ENCODE measurements at regions of chr17 and their contacts with region 1.

Region 1: DNA sequence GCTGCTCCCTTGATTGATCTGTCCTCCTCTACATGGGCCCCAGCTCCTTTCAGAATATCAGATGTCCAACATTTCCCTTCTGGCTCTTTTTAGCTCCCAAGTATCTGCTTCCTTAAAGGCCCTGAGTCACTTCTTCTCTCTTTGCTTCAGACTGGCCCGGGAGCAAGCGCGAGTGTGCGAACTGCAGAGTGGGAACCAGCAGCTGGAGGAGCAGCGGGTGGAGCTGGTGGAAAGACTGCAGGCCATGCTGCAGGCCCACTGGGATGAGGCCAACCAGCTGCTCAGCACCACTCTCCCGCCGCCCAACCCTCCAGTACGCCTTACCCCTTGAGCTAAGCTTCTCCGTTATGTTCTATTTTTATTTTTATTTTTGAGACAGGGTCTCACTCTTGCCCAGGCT is 12.3 kb downstream of the CNTROB start:
- DNase-seq: no peak
- H3K4me3 ChIP-seq: no peak overlapping the region
- CTCF ChIP-seq: no peak

Region 2: DNA sequence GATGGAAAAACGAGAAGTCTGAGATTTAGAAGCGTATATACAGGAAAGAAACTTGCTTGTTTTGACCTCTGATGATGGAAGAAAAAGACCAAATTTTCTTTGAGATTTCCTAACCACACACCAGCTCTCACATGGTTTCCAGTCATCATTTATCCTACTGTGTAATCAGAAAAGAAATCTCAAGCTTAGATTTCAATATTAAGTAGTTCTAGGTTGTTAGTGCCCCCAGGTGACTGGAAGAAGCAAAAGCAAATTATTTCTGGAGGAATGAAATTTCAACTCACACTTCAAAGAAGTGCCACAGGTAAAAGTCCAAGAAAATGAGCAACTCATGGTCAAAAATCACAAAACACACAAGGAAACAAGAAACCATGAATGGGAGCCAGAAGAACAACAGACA is 162.1 kb before region 1 on chr17:
- CTCF ChIA-PET with region 1: no interaction called
- POLR2A ChIA-PET with region 1: no interaction called
- DNase-seq: no peak
- H3K4me3 ChIP-seq: no peak overlapping the region
- CTCF ChIP-seq: no peak

Region 3: GRCh38 chr17:7931709-7932482 is 12.4 kb before region 1 on chr17 and contains the starts of genes CNTROB and TRAPPC1:
- CTCF ChIA-PET with region 1: interaction called, 26 read pairs
- POLR2A ChIA-PET with region 1: interaction called, 6 read pairs
- DNase-seq: peak; percentile 92
- H3K4me3 ChIP-seq: peak within 1 kb of the TSS; percentile 100
- CTCF ChIP-seq: no peak